HepG2 (cell line): ENCODE measurements at regions of chr6 and their contacts with region 1.

Region 1: GRCh38 chr6:113642714-113643406 is 214.3 kb upstream of the MARCKS start:
- DNase-seq: peak; percentile 100
- ATAC-seq: peak; percentile 94
- H3K4me3 ChIP-seq: peak overlapping the region in 1 of 3 experiments; percentile 44; a peak in 1 of 6 replicates
- H3K27ac ChIP-seq: peak overlapping the region; percentile 99
- H3K4me1 ChIP-seq: peaks cover 75% of the 10 kb centered on the region
- H3K27me3 ChIP-seq: no peaks in the 10 kb centered on the region
- CTCF ChIP-seq: no peak
- EP300 ChIP-seq: peak; percentile 48 to 94; a peak in 3 of 4 replicates
- POLR2A ChIP-seq: peak; percentile 49 to 53; a peak in 3 of 4 replicates
- RAD21 ChIP-seq: no peak

Region 2: DNA sequence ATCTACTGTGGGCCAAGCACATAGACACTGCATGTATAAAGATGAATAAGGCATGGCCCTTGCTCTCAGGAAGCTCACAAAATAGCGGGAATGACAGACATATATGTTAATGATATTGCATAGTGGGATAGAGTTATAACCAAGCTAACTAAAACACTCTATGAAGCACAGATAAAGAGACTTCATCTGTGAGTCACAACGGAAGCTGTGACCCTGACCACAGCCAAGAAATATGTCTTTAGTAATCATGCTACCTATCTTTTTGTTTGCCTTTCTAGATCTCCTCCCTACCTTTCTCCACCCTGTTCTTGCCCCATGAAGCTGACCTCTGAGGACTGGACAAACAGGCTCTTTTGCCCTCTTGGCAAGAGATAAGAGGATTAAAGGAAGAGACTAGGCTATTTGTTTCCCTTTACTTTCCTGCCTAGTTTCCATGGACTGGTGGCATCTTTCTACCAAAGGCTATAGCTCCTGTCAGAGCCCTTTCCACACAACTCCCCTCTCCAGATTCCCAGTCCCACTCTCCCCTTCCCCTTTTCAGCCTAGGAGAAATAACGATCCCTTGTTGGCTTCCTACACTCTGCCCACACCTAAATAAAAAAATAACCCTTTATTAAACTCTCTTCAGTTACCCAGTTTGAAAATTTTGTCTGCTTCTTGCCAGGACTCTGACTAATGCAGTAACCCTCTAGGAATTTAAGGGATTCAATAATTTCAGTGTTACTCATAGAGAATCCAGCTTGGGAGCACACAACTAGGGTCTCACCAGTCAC is 290.6 kb before region 1 on chr6:
- CTCF ChIA-PET with region 1: no interaction called
- POLR2A ChIA-PET with region 1: interaction called, 54 read pairs
- in situ Hi-C with region 1: loop called (anchors 10 kb)
- intact Hi-C with region 1: loop called (anchors 1 kb)
- DNase-seq: peak; percentile 100
- ATAC-seq: peak; percentile 94
- H3K4me3 ChIP-seq: peak overlapping the region in 1 of 3 experiments; percentile 20; a peak in 1 of 6 replicates
- H3K27ac ChIP-seq: peak overlapping the region; percentile 91
- H3K4me1 ChIP-seq: peaks cover 75% of the 10 kb centered on the region
- H3K27me3 ChIP-seq: no peaks in the 10 kb centered on the region; a peak in 1 of 5 replicates
- CTCF ChIP-seq: no peak
- EP300 ChIP-seq: peak; percentile 97 to 100
- POLR2A ChIP-seq: no peak
- RAD21 ChIP-seq: no peak

Region 3: DNA sequence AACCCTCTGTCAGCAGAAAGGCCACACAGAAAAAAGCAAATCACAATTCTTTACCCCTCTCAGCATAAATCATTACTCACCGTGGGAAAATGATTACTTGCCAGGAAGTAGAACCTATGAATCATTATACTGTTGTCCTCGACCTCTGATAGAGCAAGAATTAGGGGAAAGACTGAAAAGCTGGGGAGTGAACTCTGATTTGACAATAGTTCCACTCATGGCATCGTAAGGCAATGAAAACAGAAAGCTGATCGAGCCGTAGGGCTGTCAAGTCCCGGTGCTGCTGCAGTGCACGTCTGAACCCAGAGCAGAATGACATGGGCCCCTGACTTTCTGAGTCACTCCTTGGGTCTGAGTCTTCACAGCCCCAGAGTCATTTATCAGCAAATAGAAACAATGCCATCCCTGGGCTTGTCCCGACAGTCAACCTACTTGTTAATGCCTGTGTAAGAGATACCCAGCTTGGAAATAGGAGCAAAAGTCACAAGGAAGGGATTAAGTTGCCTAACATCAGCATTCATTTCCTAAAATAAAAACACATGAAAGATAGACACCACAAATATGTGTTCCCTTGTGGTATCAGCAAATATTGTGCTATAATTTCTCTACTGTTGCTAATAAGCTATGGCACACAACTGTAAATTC is 10.5 kb before region 1 on chr6:
- CTCF ChIA-PET with region 1: no interaction called
- POLR2A ChIA-PET with region 1: interaction called, 49 read pairs
- in situ Hi-C with region 1: no loop called
- intact Hi-C with region 1: no loop called
- DNase-seq: peak; percentile 78
- ATAC-seq: peak; percentile 92
- H3K4me3 ChIP-seq: peak overlapping the region in 2 of 3 experiments; percentile 9 to 29; a peak in 2 of 6 replicates
- H3K27ac ChIP-seq: peak overlapping the region; percentile 61
- H3K4me1 ChIP-seq: peaks cover 69% of the 10 kb centered on the region
- H3K27me3 ChIP-seq: no peaks in the 10 kb centered on the region
- CTCF ChIP-seq: no peak
- EP300 ChIP-seq: peak in 1 of 2 experiments; percentile 60; a peak in 1 of 4 replicates
- POLR2A ChIP-seq: peak in 1 of 2 experiments; percentile 38; a peak in 1 of 4 replicates
- RAD21 ChIP-seq: no peak

Region 4: GRCh38 chr6:113672491-113673149 is 29.8 kb after region 1 on chr6:
- CTCF ChIA-PET with region 1: no interaction called
- POLR2A ChIA-PET with region 1: interaction called, 21 read pairs
- in situ Hi-C with region 1: no loop called
- intact Hi-C with region 1: loop called (anchors 1 kb)
- DNase-seq: peak; percentile 23
- ATAC-seq: peak; percentile 76
- H3K4me3 ChIP-seq: peak overlapping the region; percentile 29 to 57 (median 39)
- H3K27ac ChIP-seq: peak overlapping the region; percentile 35
- H3K4me1 ChIP-seq: peaks cover 67% of the 10 kb centered on the region
- H3K27me3 ChIP-seq: no peaks in the 10 kb centered on the region
- CTCF ChIP-seq: no peak
- EP300 ChIP-seq: no peak
- POLR2A ChIP-seq: no peak
- RAD21 ChIP-seq: no peak

Region 5: GRCh38 chr6:113690281-113691259 is 47.7 kb after region 1 on chr6:
- CTCF ChIA-PET with region 1: no interaction called
- POLR2A ChIA-PET with region 1: interaction called, 12 read pairs
- in situ Hi-C with region 1: no loop called
- intact Hi-C with region 1: loop called (anchors 1 kb)
- DNase-seq: peak; percentile 58
- ATAC-seq: no peak
- H3K4me3 ChIP-seq: no peak overlapping the region
- H3K27ac ChIP-seq: no peak overlapping the region
- H3K4me1 ChIP-seq: peaks cover 33% of the 10 kb centered on the region
- H3K27me3 ChIP-seq: no peaks in the 10 kb centered on the region
- CTCF ChIP-seq: no peak
- EP300 ChIP-seq: peak in 1 of 2 experiments; percentile 42; a peak in 1 of 4 replicates
- POLR2A ChIP-seq: no peak
- RAD21 ChIP-seq: no peak